GM12878 (cell line): ENCODE measurements at regions of chr1 and their contacts with region 1.

Region 1: DNA sequence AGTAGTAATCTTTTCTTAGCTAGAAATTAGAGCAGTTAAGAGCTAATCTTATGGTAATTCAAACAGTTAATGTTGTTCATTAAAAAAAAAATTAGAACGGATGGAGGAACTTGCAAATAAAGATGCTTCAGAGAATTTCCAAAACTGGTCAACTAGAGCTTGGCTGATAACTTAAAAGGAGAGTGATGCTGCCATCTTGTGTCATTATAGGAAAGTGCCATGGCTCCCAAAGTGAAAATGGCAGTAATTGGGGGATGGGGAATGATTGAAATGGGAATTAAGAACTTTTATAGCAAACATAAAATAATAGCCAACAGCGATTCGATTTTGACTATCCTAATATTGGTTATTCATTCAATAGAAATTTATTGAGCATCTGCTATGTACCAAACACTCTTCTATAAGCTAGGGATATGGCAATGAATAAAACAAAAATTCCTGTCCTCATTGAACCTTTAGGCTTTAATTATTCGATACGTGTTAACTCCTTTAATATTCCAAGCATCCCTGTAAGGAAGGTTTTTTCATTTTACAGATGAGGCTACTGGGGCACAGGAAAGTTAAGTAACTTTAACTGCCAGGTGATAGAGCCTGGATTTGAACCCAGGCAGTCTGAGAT is 5.7 kb upstream of the PLPP3 start:
- DNase-seq: no peak
- ATAC-seq: peak; percentile 71
- H3K4me3 ChIP-seq: no peak overlapping the region
- H3K27ac ChIP-seq: no peak overlapping the region
- H3K4me1 ChIP-seq: no peaks in the 10 kb centered on the region
- H3K27me3 ChIP-seq: no peaks in the 10 kb centered on the region
- CTCF ChIP-seq: peak; percentile 71 to 82 (median 78)
- EP300 ChIP-seq: no peak
- POLR2A ChIP-seq: no peak
- RAD21 ChIP-seq: peak; percentile 95

Region 2: GRCh38 chr1:55284852-55285251 is 1300.2 kb before region 1 on chr1:
- CTCF ChIA-PET with region 1: interaction called, 96 read pairs
- POLR2A ChIA-PET with region 1: interaction called, 3 read pairs
- RAD21 ChIA-PET with region 1: interaction called, 43 read pairs
- SMC1A ChIA-PET with region 1: interaction called, 59 read pairs
- in situ Hi-C with region 1: loop called (anchors 5 kb)
- intact Hi-C with region 1: loop called (anchors 1 kb)
- DNase-seq: peak; percentile 5
- ATAC-seq: no peak
- H3K4me3 ChIP-seq: no peak overlapping the region
- H3K27ac ChIP-seq: no peak overlapping the region
- H3K4me1 ChIP-seq: peaks cover 18% of the 10 kb centered on the region
- H3K27me3 ChIP-seq: no peaks in the 10 kb centered on the region; a peak in 1 of 4 replicates
- CTCF ChIP-seq: peak; percentile 43 to 53 (median 49); a peak in 5 of 6 replicates
- EP300 ChIP-seq: no peak
- POLR2A ChIP-seq: no peak
- RAD21 ChIP-seq: peak; percentile 81

Region 3: DNA sequence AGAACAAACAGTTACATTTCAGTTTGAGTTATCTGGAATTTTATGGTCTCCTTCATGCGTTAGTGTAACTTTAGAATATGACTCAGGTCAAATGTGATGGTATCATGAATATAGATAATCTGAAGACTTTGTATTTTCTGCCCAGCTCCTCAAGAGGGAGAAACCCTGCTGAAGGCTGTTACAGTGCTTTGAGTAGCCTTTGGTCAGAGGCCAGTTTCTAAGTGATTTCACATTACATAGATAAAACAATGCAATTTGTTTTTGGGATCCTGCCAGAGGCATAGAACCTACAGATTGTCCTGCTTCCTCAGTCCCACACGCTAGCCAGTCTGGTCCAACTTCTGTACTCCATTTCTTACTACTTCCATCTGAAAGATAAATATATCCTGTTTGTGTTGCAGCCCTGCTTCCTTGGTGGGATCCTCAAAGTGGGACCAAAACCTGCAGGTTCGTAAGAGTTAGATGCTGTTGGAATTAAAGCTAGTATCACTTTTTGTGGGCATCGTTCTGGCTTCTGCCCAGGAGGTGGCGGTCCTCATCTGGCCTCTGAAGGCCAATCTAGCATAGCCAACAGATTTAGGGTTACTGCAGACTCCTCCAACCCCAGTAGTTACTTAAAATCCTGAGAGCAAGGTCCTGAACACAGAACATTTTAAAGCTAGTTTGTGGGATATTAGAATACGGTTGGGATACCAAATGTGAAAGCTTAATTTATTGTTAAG is 724.1 kb before region 1 on chr1:
- CTCF ChIA-PET with region 1: interaction called, 67 read pairs
- POLR2A ChIA-PET with region 1: interaction called, 3 read pairs
- RAD21 ChIA-PET with region 1: interaction called, 61 read pairs
- SMC1A ChIA-PET with region 1: interaction called, 57 read pairs
- in situ Hi-C with region 1: loop called (anchors 10 kb)
- intact Hi-C with region 1: loop called (anchors 2 kb)
- DNase-seq: no peak
- ATAC-seq: peak; percentile 79
- H3K4me3 ChIP-seq: no peak overlapping the region
- H3K27ac ChIP-seq: no peak overlapping the region
- H3K4me1 ChIP-seq: no peaks in the 10 kb centered on the region
- H3K27me3 ChIP-seq: no peaks in the 10 kb centered on the region; a peak in 1 of 4 replicates
- CTCF ChIP-seq: peak in 2 of 3 experiments; percentile 26 to 38; a peak in 3 of 6 replicates
- EP300 ChIP-seq: no peak
- POLR2A ChIP-seq: no peak
- RAD21 ChIP-seq: peak; percentile 44

Region 4: GRCh38 chr1:56255516-56256152 is 329.4 kb before region 1 on chr1:
- CTCF ChIA-PET with region 1: interaction called, 15 read pairs
- POLR2A ChIA-PET with region 1: no interaction called
- RAD21 ChIA-PET with region 1: interaction called, 3 read pairs
- SMC1A ChIA-PET with region 1: interaction called, 15 read pairs
- in situ Hi-C with region 1: no loop called
- intact Hi-C with region 1: loop called (anchors 10 kb)
- DNase-seq: no peak
- ATAC-seq: no peak; the same call in 2 of the 3 replicates
- H3K4me3 ChIP-seq: no peak overlapping the region
- H3K27ac ChIP-seq: no peak overlapping the region
- H3K4me1 ChIP-seq: no peaks in the 10 kb centered on the region
- H3K27me3 ChIP-seq: no peaks in the 10 kb centered on the region
- CTCF ChIP-seq: no peak
- EP300 ChIP-seq: no peak
- POLR2A ChIP-seq: no peak
- RAD21 ChIP-seq: no peak

Region 5: DNA sequence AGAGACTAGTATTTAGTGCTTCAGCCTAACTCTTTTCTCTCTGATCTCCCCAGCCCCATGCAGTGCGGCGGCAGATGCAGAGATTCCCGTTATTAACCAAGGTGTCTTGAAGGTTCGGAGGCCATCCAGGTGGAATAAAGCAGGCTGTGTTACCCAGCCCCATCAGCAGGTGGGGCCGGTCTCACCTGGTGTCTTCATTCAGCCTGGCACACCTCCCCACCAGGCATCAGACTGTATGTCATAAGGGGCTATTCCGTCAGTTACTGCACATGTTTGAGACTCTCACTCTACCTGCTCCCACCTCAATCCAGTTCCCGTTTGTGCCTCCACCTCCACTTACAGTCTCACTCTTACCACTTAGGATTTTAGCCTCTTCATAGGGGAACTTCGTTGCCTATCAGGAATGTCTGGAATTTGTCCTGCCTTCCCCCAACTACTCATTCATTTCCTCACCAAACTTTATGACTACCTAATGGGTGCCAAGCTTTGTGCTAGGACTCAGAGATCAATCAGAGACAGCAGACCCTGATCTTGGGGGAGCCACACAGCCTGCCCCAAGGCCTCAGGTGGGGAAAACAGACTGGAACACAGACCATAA is 175.8 kb before region 1 on chr1:
- CTCF ChIA-PET with region 1: interaction called, 257 read pairs
- POLR2A ChIA-PET with region 1: no interaction called
- RAD21 ChIA-PET with region 1: interaction called, 146 read pairs
- SMC1A ChIA-PET with region 1: interaction called, 154 read pairs
- in situ Hi-C with region 1: no loop called
- intact Hi-C with region 1: loop called (anchors 1 kb)
- DNase-seq: no peak
- ATAC-seq: peak; percentile 79
- H3K4me3 ChIP-seq: no peak overlapping the region
- H3K27ac ChIP-seq: no peak overlapping the region
- H3K4me1 ChIP-seq: no peaks in the 10 kb centered on the region
- H3K27me3 ChIP-seq: no peaks in the 10 kb centered on the region
- CTCF ChIP-seq: peak; percentile 49 to 53 (median 52); a peak in 5 of 6 replicates
- EP300 ChIP-seq: no peak
- POLR2A ChIP-seq: no peak
- RAD21 ChIP-seq: peak; percentile 44

Region 6: GRCh38 chr1:56570924-56571372 is 14.1 kb before region 1 on chr1:
- CTCF ChIA-PET with region 1: interaction called, 253 read pairs
- POLR2A ChIA-PET with region 1: interaction called, 195 read pairs
- RAD21 ChIA-PET with region 1: interaction called, 381 read pairs
- SMC1A ChIA-PET with region 1: interaction called, 439 read pairs
- in situ Hi-C with region 1: no loop called
- intact Hi-C with region 1: no loop called
- DNase-seq: no peak
- ATAC-seq: peak; percentile 33
- H3K4me3 ChIP-seq: no peak overlapping the region
- H3K27ac ChIP-seq: no peak overlapping the region
- H3K4me1 ChIP-seq: no peaks in the 10 kb centered on the region
- H3K27me3 ChIP-seq: peaks cover 0 to 3% of the 10 kb centered on the region in 2 experiments; a peak in 1 of 4 replicates
- CTCF ChIP-seq: no peak
- EP300 ChIP-seq: no peak
- POLR2A ChIP-seq: no peak
- RAD21 ChIP-seq: no peak

Region 7: DNA sequence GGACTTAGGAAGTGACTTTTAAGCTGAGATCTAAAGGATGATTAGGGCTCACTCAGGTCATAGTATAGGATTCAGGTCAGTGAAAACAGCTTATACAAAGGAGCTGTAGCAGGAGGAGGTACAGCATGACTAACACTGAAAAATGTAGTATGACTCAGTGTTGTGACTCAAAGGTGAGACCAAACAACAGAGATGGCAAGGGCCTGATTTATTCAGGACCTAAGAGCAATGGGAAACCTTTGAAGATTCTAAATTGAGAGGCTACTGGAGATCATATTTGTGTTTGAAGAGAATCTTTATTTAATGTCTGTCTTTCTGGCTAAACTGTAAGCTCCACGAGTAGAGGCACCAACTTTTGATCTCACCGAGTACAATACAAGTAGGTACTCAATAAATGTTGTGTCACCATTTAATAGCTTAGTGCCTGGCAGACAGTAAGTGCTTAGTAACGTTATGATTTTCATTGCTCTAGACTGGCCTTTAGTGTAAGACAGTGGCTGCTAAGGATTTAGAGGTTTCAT is 103.5 kb after region 1 on chr1:
- CTCF ChIA-PET with region 1: no interaction called
- POLR2A ChIA-PET with region 1: no interaction called
- RAD21 ChIA-PET with region 1: no interaction called
- SMC1A ChIA-PET with region 1: no interaction called
- in situ Hi-C with region 1: no loop called
- intact Hi-C with region 1: no loop called
- DNase-seq: peak; percentile 1
- ATAC-seq: peak; percentile 98
- H3K4me3 ChIP-seq: no peak overlapping the region
- H3K27ac ChIP-seq: no peak overlapping the region
- H3K4me1 ChIP-seq: no peaks in the 10 kb centered on the region
- H3K27me3 ChIP-seq: no peaks in the 10 kb centered on the region
- CTCF ChIP-seq: no peak
- EP300 ChIP-seq: peak in 1 of 2 experiments; percentile 21; a peak in 1 of 4 replicates
- POLR2A ChIP-seq: no peak
- RAD21 ChIP-seq: no peak